ENCODE measurements at regions of chr12 and their contacts with region 1.

Region 1: DNA sequence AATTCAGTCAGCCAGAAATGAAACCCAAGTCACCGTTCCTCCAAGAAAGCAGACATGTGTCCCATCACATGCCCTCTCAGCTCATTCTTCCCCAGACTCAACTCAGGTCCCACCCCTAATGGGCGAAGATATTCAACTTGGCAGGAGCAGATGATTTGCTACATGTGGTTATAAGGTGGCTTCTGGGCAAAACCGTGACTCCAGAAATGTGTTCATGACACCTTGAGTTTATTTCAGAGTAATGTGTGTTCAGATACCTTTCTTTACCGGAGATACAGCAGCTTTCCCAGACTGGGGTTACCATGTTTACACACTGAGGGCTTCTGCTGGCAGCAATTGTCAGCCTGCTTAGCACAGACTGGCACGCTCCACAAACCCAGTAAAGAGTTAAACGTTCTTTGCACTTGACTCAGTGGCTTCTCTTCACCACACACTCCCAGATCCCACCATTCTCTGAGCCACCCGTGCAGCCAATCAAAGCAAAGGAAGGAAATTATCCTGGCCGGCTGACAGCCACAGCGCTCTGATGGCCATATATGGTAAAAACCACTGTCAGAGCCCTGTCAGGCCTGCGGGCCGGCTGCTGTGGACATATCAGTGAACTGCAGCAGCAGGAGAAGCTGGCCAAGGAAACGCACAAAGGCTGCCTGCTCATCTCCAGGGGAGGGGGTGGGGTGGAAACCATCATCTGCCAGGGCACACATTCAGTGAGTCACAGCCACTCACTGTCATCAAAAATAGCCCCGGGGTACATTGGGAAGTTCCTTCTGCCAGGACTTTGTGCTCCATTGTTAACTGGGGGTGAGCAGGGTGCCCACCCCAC is 39.9 kb downstream of the CORO1C start:
- DNase-seq: peak; percentile 100
- ATAC-seq: peak; percentile 90
- H3K4me3 ChIP-seq: peak overlapping the region; percentile 58
- H3K27ac ChIP-seq: peak overlapping the region; percentile 89
- H3K4me1 ChIP-seq: peaks cover 68% of the 10 kb centered on the region
- H3K27me3 ChIP-seq: no peaks in the 10 kb centered on the region
- CTCF ChIP-seq: 0 out of 2 replicates have a peak, but pooled peaks have one; percentile 14

Region 2: DNA sequence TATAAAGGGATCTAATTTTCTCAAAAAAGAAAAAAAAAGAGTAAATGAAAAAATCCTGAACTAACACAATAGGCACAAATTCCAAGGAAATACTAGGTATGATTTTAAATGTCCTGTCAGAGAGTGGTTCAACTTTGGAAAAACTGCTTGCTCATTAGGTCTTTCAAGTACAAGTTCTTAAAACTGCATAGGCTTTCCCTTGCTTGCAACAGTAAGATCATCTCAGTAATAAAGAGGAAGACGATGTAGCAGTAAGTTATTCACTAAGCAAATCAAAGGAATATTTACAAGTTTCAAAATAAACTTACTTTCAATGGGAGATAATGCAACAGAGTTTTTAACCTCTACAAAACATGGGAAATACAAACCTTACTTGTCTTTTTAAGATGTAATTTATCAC is 18.3 kb after region 1 on chr12:
- CTCF ChIA-PET with region 1: no interaction called
- POLR2A ChIA-PET with region 1: interaction called, 14 read pairs
- intact Hi-C with region 1: no loop called
- DNase-seq: no peak
- ATAC-seq: peak; percentile 31; the same call in 1 of the 2 replicates
- H3K4me3 ChIP-seq: no peak overlapping the region
- H3K27ac ChIP-seq: no peak overlapping the region
- H3K4me1 ChIP-seq: no peaks in the 10 kb centered on the region
- H3K27me3 ChIP-seq: no peaks in the 10 kb centered on the region
- CTCF ChIP-seq: no peak

Region 3: DNA sequence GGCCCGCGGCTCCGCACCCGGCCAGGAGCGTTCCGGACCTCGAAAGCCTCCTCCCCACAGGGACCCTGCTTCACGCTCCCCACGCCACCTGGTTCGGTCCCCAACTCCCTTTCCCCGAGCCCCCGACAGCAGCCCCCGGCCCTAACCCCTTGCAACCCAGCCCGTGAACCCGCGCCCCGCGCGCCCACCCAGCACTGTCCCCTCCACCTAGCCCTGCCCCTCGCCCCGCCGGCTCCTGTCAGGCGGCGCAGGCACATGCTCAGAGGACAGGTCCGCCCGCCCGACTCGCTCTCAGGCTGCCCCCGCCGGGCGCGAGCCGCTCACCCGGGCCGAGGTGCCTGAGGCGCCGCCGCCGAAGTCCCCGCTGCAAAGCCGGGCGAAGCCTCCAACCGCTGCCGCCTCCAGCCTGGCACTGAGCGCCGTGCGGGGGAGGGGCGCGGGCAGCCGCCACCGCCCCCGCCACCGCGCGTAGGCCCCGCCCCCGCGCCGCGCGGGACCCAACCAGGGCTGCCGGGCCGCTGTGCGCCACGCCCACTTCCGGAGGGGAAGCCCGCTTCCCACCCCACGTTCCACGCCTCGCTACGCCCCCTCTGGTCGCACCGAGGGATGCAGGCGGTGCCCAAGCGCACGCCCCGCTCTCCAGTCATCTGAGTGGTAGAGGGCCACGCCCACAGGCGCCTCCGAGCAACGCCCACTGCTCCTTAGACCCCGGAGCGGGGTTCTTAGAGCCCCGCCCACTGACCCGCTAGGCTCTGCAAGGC is 39.9 kb after region 1 on chr12 and contains the start of gene CORO1C:
- CTCF ChIA-PET with region 1: no interaction called
- POLR2A ChIA-PET with region 1: interaction called, 6 read pairs
- intact Hi-C with region 1: loop called (anchors 1 kb)
- DNase-seq: peak; percentile 99
- ATAC-seq: peak; percentile 53
- H3K4me3 ChIP-seq: peak within 1 kb of the TSS; percentile 68
- H3K27ac ChIP-seq: peak within 1 kb of the TSS; percentile 87
- H3K4me1 ChIP-seq: peaks cover 57% of the 10 kb centered on the region
- H3K27me3 ChIP-seq: no peaks in the 10 kb centered on the region
- CTCF ChIP-seq: peak; percentile 83
- total RNA-seq, gene CORO1C: 159 and 179 TPM in 2 replicates

Region 4: DNA sequence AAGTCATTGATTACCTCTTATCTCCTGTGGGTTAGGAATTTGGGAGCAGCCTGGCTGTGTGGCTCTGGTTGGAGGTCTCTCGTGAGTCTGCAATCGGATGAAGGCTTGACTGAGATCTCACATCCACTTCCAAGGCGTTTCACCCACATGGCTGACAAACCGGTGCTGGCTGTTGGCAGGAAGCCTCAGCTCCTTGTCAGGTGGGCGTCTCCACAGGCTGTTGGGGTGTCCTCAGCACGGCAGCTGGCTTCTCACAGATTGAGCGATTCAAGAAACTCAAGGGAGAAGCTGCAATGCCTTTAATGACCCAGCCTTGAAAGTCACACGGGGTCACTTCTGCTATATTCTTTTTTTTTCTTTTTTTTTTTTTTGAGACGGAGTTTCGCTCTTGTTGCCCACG is 68.5 kb after region 1 on chr12:
- CTCF ChIA-PET with region 1: no interaction called
- POLR2A ChIA-PET with region 1: no interaction called
- intact Hi-C with region 1: no loop called
- DNase-seq: no peak
- ATAC-seq: no peak
- H3K4me3 ChIP-seq: no peak overlapping the region
- H3K27ac ChIP-seq: no peak overlapping the region
- H3K4me1 ChIP-seq: no peaks in the 10 kb centered on the region
- H3K27me3 ChIP-seq: no peaks in the 10 kb centered on the region
- CTCF ChIP-seq: no peak

Region 5: DNA sequence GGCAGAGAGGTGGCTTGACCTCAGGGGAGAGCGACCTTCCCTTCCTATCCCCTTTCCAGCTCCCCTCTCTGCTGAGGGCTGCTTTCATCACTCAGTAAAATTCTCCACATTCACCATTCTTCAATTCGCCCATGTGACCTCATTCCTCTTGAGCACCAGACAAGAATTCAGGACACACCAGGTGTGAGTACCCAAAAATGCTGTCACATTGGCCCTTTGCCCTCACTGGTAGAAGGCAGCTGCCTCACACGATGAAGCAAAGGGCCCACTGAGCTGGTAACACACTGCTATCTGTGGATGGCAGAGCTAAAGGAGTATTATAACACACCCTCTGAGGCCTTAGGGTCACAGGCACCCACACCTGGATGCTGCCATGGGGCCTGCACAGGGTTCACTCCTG is 106.3 kb after region 1 on chr12:
- CTCF ChIA-PET with region 1: no interaction called
- POLR2A ChIA-PET with region 1: no interaction called
- intact Hi-C with region 1: no loop called
- DNase-seq: no peak
- ATAC-seq: no peak
- H3K4me3 ChIP-seq: no peak overlapping the region
- H3K27ac ChIP-seq: no peak overlapping the region
- H3K4me1 ChIP-seq: no peaks in the 10 kb centered on the region
- H3K27me3 ChIP-seq: no peaks in the 10 kb centered on the region
- CTCF ChIP-seq: no peak